Endothelial cell of umbilical vein (primary cell): ENCODE measurements at regions of chr2 and their contacts with region 1.

Region 1: GRCh38 chr2:10678222-10678621 is 11.6 kb downstream of the NOL10 start:
- DNase-seq: no peak
- H3K4me3 ChIP-seq: no peak overlapping the region
- H3K27ac ChIP-seq: no peak overlapping the region
- H3K4me1 ChIP-seq: no peaks in the 10 kb centered on the region
- H3K27me3 ChIP-seq: no peaks in the 10 kb centered on the region
- CTCF ChIP-seq: peak in 1 of 2 donors; percentile 24
- POLR2A ChIP-seq: no peak

Region 2: GRCh38 chr2:10467401-10467800 is 210.8 kb before region 1 on chr2:
- CTCF ChIA-PET with region 1: no interaction called
- POLR2A ChIA-PET with region 1: no interaction called
- dilution Hi-C with region 1: no loop called
- intact Hi-C with region 1: no loop called
- DNase-seq: no peak
- H3K4me3 ChIP-seq: no peak overlapping the region
- H3K27ac ChIP-seq: no peak overlapping the region
- H3K4me1 ChIP-seq: no peaks in the 10 kb centered on the region
- H3K27me3 ChIP-seq: peaks cover 2 to 3% of the 10 kb centered on the region in 2 experiments
- CTCF ChIP-seq: peak in 1 of 2 donors; percentile 24
- POLR2A ChIP-seq: no peak

Region 3: GRCh38 chr2:10700078-10700803 is 22.0 kb after region 1 on chr2:
- CTCF ChIA-PET with region 1: no interaction called
- POLR2A ChIA-PET with region 1: no interaction called
- dilution Hi-C with region 1: no loop called
- intact Hi-C with region 1: loop called (anchors 1 kb)
- DNase-seq: no peak
- H3K4me3 ChIP-seq: no peak overlapping the region
- H3K27ac ChIP-seq: no peak overlapping the region
- H3K4me1 ChIP-seq: no peaks in the 10 kb centered on the region
- H3K27me3 ChIP-seq: peaks cover 0 to 3% of the 10 kb centered on the region in 2 experiments
- CTCF ChIP-seq: no peak
- POLR2A ChIP-seq: no peak